HAP-1 (cell line): ENCODE measurements at regions of chr9 and their contacts with region 1.

Region 1: GRCh38 chr9:38233343-38233742 is 159.2 kb upstream of the ALDH1B1 start:
- DNase-seq: no peak
- H3K4me3 ChIP-seq: no peak overlapping the region
- H3K4me1 ChIP-seq: peaks cover 4% of the 10 kb centered on the region; the same call in 1 of the 2 replicates
- H3K27me3 ChIP-seq: peaks cover 5% of the 10 kb centered on the region; the same call in 1 of the 2 replicates

Region 2: DNA sequence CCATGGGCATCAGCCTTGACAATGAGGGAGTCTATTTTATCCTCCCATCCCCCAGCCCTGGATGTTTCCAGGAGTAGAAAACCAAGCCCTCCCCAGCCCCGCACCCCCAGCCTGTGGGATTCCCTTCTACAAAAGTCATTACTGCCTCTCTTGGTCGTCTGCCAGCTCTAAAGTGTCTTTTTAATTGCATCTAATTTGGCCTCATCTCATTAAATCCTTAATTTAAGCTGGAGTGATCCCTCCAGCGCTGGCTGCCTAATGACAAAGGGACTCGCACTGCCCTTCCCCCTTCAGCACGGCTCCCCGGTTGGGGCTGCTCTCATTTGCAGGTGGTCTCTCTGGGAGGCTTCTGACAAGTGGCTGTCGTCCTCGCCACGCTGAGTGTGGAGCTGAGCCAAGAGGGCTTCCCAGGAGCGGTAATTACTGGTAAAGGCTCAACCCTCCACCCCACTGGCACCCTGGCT is 51.3 kb after region 1 on chr9:
- in situ Hi-C with region 1: loop called (anchors 5 kb)
- DNase-seq: no peak
- H3K4me3 ChIP-seq: no peak overlapping the region
- H3K4me1 ChIP-seq: no peaks in the 10 kb centered on the region
- H3K27me3 ChIP-seq: no peaks in the 10 kb centered on the region